ENCODE measurements at regions of chr7 and their contacts with region 1.

Region 1: DNA sequence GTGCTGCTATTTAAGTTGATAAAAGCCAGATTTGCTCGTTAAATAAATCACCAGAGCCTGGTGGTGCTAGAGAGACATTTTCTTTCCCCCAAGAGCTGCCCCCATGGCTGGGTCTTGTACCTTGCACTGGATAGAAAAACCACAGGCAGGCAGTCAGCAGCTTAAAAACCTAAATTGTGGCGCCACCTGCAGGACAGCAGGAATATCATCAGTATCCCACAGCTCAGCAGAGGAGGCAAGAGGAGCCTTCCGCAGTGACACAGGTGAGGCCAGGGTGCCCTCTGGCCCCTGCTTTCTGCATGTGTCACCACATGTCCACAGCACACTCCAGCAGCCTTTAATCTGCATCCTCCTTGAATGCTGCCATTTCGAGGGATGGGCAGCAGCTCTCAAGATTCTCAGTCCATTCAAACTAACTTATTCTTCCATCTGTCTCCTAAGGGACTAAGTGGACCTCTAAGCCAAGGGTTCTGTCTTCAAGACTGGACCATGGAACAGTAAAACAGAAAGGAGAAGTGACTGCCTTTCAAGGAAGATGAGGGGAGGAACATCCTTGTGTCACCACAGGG is 4.5 kb upstream of the PLXNA4 start:
- DNase-seq: peak; percentile 40 to 50
- ATAC-seq: peak; percentile 62 to 68
- H3K4me3 ChIP-seq: no peak overlapping the region
- H3K27ac ChIP-seq: no peak overlapping the region
- H3K4me1 ChIP-seq: peaks cover 0 to 15% of the 10 kb centered on the region in 2 donors
- H3K27me3 ChIP-seq: peaks cover 0 to under 1% (median 0%) of the 10 kb centered on the region in 3 donors
- CTCF ChIP-seq: peak; percentile 55 to 77 (median 64)
- POLR2A ChIP-seq: no peak

Region 2: GRCh38 chr7:131688738-131689661 is 891.8 kb before region 1 on chr7:
- in situ Hi-C with region 1: loop called in 2 of 4 experiments (anchors 25 kb)
- intact Hi-C with region 1: no loop called
- DNase-seq: peak; percentile 12 to 39
- ATAC-seq: peak; percentile 73 to 76
- H3K4me3 ChIP-seq: no peak overlapping the region
- H3K27ac ChIP-seq: no peak overlapping the region
- H3K4me1 ChIP-seq: no peaks in the 10 kb centered on the region
- H3K27me3 ChIP-seq: peaks cover 10 to 12% (median 11%) of the 10 kb centered on the region in 3 donors
- CTCF ChIP-seq: peak; percentile 66 to 93 (median 83)
- POLR2A ChIP-seq: no peak

Region 3: DNA sequence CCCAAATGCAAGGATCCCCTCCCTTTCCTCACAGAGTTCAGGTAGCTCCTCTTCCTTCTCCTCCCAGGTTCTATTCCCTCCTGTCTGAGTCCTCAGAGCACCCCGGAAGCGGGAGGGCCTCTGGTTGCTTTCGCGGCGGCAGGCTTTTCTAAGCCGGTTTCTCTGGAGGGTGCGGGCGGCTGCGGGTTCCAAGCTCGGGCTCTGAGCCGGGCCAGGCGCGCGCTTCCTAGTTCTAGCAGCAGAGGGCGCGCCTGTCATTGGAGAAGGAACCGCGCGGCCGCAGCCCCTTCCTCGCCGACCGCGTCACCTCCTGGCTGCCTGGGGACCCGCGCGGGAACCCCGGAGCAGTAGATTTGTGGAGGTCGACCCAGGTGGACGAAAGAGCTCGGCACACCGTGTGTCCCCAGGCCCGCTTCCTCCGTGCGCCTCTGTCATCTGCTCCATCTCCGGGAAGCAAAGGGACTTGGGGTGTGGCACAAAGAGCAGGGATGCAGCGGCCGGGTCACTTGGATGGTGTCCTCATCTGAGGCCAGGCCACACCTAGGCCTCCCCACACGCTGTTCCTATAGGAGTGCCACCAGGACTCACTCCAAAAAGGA is 635.4 kb before region 1 on chr7:
- in situ Hi-C with region 1: loop called in 3 of 4 experiments (anchors 10 to 25 kb)
- intact Hi-C with region 1: loop called (anchors 5 kb)
- DNase-seq: no peak
- ATAC-seq: peak; percentile 33 to 55
- H3K4me3 ChIP-seq: peak overlapping the region; percentile 23 to 46 (median 36)
- H3K27ac ChIP-seq: no peak overlapping the region
- H3K4me1 ChIP-seq: peaks cover 8 to 9% of the 10 kb centered on the region in 2 donors
- H3K27me3 ChIP-seq: no peaks in the 10 kb centered on the region
- CTCF ChIP-seq: peak; percentile 77 to 93 (median 85)
- POLR2A ChIP-seq: no peak

Region 4: GRCh38 chr7:132318352-132319318 is 262.2 kb before region 1 on chr7:
- in situ Hi-C with region 1: loop called in 3 of 4 experiments (anchors 5 to 10 kb)
- intact Hi-C with region 1: loop called (anchors 1 kb)
- DNase-seq: peak; percentile 57 to 65
- ATAC-seq: peak; percentile 86 to 95
- H3K4me3 ChIP-seq: peak overlapping the region in 2 of 4 donors; percentile 4 to 35
- H3K27ac ChIP-seq: no peak overlapping the region
- H3K4me1 ChIP-seq: peaks cover 8 to 9% of the 10 kb centered on the region in 2 donors
- H3K27me3 ChIP-seq: peaks cover 0 to 14% (median 0%) of the 10 kb centered on the region in 3 donors
- CTCF ChIP-seq: peak; percentile 76 to 88 (median 86)
- POLR2A ChIP-seq: no peak

Region 5: DNA sequence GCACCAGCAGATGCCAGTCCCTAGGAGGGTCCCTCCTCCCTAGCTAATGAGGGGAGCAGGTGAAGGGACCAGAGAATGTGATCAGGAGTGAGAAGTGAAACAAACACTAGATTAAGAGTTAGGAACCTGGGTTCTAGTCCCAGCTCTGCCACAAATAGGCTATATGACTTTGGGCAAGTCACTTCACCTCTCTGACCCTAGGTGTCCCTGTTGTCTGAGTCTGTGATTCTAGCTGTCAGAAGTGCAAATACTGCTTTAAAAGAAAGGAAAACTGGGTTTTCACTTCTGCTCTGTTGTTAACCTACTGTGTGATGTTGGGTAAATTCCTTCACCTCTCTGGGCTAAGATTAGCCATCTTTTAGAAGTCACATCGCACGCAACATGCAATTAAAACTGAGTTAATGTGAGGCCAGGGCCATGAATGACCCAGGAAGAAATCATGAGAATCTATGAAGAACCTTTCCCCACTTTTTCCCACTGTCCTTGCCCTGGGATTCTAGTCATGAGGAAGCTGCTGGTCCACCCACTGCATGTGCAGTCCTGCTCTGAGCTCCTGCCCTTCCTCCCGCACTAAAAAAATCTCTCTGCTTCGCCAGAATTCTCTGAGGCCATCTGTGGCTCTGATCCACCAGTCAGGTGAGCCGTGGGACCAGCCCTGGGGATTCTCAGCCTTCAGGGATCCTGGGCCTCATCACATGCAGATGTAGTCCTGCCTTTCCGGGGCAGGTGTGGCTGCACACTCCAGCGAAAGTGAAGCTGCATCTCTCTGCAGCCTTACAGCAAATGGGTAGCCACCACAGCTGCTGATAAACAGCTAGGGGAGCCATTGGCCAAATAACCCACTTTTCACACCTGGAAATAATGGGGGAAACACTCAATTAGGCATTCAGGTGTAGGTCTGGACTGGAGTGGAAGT is 186.3 kb before region 1 on chr7:
- in situ Hi-C with region 1: no loop called
- intact Hi-C with region 1: loop called (anchors 5 kb)
- DNase-seq: no peak
- ATAC-seq: no peak
- H3K4me3 ChIP-seq: no peak overlapping the region
- H3K27ac ChIP-seq: no peak overlapping the region
- H3K4me1 ChIP-seq: no peaks in the 10 kb centered on the region
- H3K27me3 ChIP-seq: no peaks in the 10 kb centered on the region
- CTCF ChIP-seq: no peak
- POLR2A ChIP-seq: no peak

Region 6: DNA sequence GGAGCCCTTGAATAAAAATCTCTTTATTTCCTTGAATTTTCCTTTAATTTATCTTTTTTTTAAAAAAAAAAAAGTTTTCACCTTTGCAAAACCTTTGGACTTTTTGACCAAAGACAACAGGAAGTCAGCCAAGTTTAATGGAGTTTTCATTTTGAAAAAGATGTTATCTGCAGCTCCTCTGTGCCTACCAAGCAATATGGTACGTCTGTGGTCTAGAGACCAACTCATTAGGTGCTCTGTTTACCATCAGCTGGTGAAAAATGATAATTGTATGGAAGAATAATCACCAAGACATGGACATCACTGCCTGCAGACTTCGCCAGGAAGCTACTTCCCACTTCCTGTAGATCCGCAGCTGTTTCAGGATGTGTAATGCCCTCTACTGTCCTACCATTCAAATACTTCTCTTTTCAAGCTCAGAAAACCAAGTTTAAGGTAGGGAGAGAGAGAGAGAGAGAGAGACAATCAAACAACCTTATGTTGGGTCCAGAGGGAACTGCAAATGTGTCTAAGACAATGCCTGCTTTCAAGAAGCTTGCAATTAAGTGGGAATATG is 23.2 kb before region 1 on chr7:
- in situ Hi-C with region 1: no loop called
- intact Hi-C with region 1: no loop called
- DNase-seq: no peak
- ATAC-seq: no peak
- H3K4me3 ChIP-seq: no peak overlapping the region
- H3K27ac ChIP-seq: no peak overlapping the region
- H3K4me1 ChIP-seq: no peaks in the 10 kb centered on the region
- H3K27me3 ChIP-seq: no peaks in the 10 kb centered on the region
- CTCF ChIP-seq: no peak
- POLR2A ChIP-seq: no peak

Region 7: GRCh38 chr7:132603220-132603833 is 22.5 kb after region 1 on chr7:
- in situ Hi-C with region 1: no loop called
- intact Hi-C with region 1: loop called (anchors 1 kb)
- DNase-seq: no peak
- ATAC-seq: no peak
- H3K4me3 ChIP-seq: no peak overlapping the region
- H3K27ac ChIP-seq: no peak overlapping the region
- H3K4me1 ChIP-seq: no peaks in the 10 kb centered on the region
- H3K27me3 ChIP-seq: no peaks in the 10 kb centered on the region
- CTCF ChIP-seq: no peak
- POLR2A ChIP-seq: no peak